Cardiac septum (tissue), 1 donor: ENCODE measurements at regions of chr17 and their contacts with region 1.

Region 1: GRCh38 chr17:11264183-11264871 is 23.3 kb downstream of the SHISA6 start:
- DNase-seq: no peak

Region 2: DNA sequence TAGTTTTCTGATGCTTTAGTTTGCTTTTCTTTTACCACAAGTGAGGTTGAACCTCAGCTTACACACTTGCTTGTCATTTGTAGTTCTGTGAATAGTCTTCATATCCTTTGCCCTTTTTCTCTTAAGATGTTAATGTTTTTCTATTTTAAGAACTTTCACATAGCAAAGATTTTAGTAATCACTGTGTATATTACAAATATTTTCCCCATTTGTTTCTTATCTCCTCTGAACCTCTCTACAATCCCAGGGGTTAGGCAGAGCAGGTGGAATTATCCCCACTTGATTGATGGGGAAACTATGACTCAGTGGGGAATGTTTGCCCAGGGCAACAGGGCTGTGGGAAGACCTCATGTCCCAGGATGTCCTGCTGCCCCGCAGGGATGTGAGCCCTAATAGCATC is 595.6 kb before region 1 on chr17:
- intact Hi-C with region 1: no loop called
- DNase-seq: no peak

Region 3: DNA sequence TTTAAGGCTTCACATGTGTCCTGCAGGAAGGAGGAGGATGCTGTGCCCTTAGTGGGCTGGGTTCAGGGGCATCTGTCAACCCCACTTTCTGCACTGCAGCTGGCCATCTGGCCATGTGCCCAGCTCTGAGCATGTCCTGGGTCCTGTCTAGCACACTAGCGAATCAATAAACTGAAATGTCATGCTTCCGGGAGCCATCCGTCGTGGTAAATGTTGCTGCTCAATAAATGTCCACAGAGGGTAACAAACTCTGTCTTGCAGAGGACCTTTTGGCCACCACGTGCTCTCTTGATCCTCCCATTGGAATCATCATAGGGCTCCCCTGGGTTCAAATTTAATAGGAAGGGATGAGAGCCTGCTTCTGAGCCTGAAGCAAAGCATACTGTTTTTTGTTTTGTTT is 257.8 kb before region 1 on chr17:
- intact Hi-C with region 1: no loop called
- DNase-seq: no peak

Region 4: DNA sequence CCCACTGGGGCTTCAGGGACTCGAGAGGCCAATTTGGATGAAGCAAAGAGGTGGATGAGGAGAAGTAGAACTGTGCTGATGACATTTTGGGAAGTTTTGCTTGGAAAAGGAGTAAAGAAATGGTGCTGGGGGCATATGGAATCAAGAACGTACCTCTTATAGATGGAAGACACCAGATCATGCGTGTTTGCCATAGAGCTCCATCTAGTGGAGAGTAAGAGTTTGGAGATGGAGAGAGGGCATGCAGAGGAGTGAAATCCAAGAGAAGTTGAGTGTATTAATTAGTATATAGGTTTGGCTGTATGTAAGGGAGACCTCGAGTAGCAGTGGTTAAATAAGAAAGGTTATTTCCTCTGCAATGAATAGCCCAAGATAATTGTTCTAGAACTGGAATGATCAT is 32.7 kb after region 1 on chr17:
- intact Hi-C with region 1: no loop called
- DNase-seq: no peak

Region 5: DNA sequence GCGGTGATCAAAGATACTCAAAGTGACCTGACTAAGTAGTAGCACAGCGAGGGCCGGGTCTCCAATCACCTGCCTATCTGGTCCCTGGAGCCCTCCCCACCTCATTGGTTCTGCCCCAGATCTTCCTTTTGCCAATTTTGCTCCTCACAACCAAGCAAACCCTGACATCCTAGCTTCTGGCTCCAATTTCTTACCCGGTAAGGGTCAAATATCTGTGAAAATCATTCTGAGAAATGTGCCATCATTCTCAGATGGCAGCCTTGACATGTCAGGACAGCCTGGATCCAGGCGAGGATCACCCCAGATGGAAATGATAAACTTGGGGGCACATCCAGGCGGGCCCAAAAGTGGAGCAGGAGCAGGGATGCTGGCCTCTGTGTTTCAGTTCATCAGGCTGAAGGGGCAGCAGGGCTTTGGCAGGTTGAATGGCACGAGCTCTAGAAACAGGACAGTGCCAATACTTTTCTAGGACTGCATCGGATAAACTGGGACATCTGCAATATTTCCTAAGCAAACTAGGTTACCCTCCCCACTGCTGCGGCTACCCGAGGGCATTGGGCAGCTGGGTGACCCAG is 60.6 kb after region 1 on chr17:
- intact Hi-C with region 1: loop called (anchors 10 kb)
- DNase-seq: no peak